Mammary epithelial cell (primary cell): ENCODE measurements at regions of chr9 and their contacts with region 1.

Region 1: DNA sequence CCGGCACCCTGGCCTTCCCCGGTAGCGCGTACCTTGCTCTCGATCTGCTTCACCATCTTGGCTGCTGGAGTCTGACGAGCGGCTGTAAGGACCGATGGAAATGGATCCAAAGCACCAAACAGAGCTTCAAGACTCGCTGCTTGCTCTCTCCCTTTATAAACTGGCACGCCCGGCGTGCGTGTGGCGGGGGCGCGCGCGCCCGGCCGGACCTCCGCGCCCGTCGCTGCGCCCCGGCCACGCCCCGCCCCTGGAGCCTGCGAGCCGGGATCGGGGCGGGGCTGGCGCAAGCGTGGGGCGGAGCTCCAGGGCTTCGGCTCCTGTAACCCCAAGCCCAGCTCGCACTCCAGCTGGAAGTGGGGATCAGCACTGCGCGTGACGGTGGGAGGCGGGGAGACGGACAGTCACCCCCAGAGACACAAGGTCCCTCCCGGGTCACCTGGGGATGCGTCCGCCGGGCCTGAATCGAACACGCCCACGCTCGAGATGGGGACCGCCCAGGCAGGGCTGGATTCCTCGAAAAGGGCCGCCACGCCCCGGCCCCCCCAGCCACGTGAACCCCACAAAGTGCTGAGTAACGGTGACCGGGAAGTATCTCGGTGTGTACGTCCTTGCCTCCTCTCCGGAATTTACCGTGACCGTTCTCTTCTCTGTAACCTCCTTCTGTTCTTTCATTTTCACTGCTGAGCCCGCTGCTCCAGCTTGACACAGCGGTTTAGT is at the start of gene TXN:
- DNase-seq: peak; percentile 95
- H3K4me3 ChIP-seq: peak within 1 kb of the TSS; percentile 94 to 97 (median 95)
- H3K27ac ChIP-seq: peak within 1 kb of the TSS; percentile 94
- H3K4me1 ChIP-seq: peaks cover 35% of the 10 kb centered on the region
- H3K27me3 ChIP-seq: no peaks in the 10 kb centered on the region
- CTCF ChIP-seq: no peak
- total RNA-seq, gene TXN: 337 to 532 TPM

Region 2: DNA sequence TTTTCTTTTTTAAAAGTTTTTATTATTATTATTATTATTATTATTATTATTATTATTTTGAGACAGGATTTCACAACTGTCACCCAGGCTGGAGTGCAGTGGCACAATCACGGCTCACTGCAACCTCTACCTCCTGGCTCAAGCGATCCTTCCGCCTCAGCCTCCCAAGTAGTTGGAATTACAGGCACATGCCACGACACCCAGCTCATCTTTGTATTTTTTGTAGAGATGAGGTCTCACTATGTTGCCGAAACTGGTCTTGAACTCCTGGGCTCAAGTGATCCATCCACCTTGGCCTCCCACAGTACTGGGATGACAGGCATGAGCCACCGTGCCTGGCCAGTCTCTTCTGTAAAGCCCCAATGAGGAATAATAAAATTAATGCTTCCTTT is 30.7 kb after region 1 on chr9:
- CTCF ChIA-PET with region 1: interaction called, 4 read pairs
- dilution Hi-C with region 1: no loop called
- in situ Hi-C with region 1: no loop called
- intact Hi-C with region 1: loop called (anchors 2 kb)
- DNase-seq: no peak
- H3K4me3 ChIP-seq: no peak overlapping the region
- H3K27ac ChIP-seq: no peak overlapping the region
- H3K4me1 ChIP-seq: peaks cover 47% of the 10 kb centered on the region
- H3K27me3 ChIP-seq: no peaks in the 10 kb centered on the region
- CTCF ChIP-seq: no peak

Region 3: DNA sequence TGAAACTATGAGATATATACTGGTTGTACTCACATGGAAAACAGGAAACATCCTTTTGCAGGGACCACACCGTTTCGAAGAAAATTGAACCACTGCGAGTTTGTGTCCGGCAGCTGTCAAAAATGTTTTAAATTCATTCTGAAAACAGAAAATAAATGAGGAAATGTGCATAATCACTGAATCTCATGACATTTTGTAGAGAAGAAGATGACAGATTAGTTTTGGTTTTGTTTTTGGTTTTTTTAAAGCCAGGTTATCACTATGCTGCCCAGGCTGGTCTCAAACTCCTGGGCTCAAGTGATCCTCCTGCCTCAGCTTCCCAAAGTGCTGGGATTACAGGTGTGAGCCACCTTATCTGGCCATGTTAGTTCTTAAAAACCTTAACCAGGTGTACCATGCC is 77.6 kb after region 1 on chr9:
- CTCF ChIA-PET with region 1: no interaction called
- dilution Hi-C with region 1: no loop called
- in situ Hi-C with region 1: no loop called
- intact Hi-C with region 1: loop called (anchors 2 kb)
- DNase-seq: no peak
- H3K4me3 ChIP-seq: no peak overlapping the region
- H3K27ac ChIP-seq: no peak overlapping the region
- H3K4me1 ChIP-seq: no peaks in the 10 kb centered on the region
- H3K27me3 ChIP-seq: no peaks in the 10 kb centered on the region
- CTCF ChIP-seq: no peak

Region 4: GRCh38 chr9:110427497-110428104 is 171.1 kb after region 1 on chr9:
- CTCF ChIA-PET with region 1: no interaction called
- dilution Hi-C with region 1: no loop called
- in situ Hi-C with region 1: no loop called
- intact Hi-C with region 1: loop called (anchors 5 kb)
- DNase-seq: peak; percentile 12
- H3K4me3 ChIP-seq: no peak overlapping the region
- H3K27ac ChIP-seq: no peak overlapping the region
- H3K4me1 ChIP-seq: no peaks in the 10 kb centered on the region
- H3K27me3 ChIP-seq: no peaks in the 10 kb centered on the region
- CTCF ChIP-seq: peak; percentile 68 to 73

Region 5: DNA sequence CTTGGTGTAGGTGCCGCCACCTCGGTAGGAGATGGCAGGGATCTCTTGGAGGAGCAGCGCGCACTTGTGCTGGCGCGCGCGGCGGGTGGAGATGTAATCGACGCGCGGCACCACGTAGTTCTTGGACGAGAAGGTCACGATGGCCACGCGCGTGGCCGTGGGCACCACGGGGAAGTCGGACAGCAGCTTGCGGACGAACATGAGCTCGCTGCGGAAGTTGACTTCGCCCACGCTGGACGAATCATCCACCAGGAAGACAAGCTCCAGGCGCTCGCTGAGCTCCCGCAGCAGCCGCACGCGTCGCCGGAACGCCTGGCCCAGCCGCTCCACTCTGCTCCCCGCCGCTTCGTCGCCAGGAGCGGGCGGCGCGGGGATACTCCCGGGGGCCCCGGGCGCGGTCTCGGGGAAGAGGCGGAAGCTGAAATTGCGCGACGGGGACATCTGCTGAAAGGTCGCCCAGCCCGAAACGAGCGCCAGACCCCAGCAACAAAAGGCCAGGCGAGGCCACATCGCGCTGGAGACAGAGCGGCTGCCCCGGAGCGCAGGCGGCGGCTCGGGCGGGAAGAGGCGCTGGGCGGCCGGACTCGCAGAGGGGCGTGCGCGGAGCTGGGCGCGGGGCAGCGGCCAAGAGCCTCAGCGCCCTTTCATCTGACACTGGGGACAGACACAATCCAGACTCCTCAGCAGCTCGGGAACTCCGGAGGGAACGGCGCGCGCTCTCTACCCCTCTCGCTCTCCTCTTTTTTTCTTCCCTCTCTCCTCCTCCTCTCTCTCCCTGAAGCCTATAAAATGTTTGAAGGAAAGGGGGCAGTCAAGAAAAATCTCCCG is 322.7 kb after region 1 on chr9 and contains the start of gene SVEP1:
- CTCF ChIA-PET with region 1: no interaction called
- dilution Hi-C with region 1: no loop called
- in situ Hi-C with region 1: no loop called
- intact Hi-C with region 1: loop called (anchors 5 kb)
- DNase-seq: peak; percentile 72
- H3K4me3 ChIP-seq: peak within 1 kb of the TSS; percentile 65 to 78 (median 69)
- H3K27ac ChIP-seq: peak within 1 kb of the TSS; percentile 43
- H3K4me1 ChIP-seq: peaks cover 32% of the 10 kb centered on the region
- H3K27me3 ChIP-seq: no peaks in the 10 kb centered on the region
- CTCF ChIP-seq: no peak
- total RNA-seq, gene SVEP1: 4.5 to 29.8 TPM